Naive thymus-derived CD4-positive, alpha-beta T cell (primary cell): ENCODE measurements at regions of chr6 and their contacts with region 1.

Region 1: DNA sequence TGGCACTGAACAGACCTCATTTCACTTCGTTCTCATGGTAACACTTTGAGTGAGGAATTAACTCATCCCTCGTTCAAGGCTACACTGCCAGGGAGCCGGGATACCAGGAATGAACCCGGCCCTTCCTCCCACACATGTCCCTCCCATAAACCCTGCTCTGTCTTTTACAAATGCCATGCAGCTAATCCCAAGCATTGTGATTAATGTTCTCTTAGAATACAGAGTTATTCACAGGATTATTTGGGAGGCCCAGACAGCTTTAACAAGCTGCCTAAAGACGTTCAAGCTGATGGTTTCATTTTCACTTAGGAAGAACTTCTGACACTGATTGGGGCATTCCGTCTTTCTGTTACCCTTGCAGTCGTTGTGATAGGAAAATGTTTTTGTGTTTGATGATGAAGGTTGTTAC is 42.5 kb upstream of the CD83 start:
- DNase-seq: peak in 7 of 9 donors; percentile 46 to 71 (median 61)
- ATAC-seq: peak; percentile 93
- H3K4me3 ChIP-seq: peak overlapping the region; percentile 57
- H3K4me3 Mint-ChIP-seq: peak overlapping the region; percentile 72 to 92 (median 82)
- H3K27ac ChIP-seq: peak overlapping the region; percentile 84
- H3K27ac Mint-ChIP-seq: peak overlapping the region; percentile 87 to 99 (median 95)
- H3K4me1 ChIP-seq: peaks cover 5 to 7% of the 10 kb centered on the region in 2 donors
- H3K4me1 Mint-ChIP-seq: peaks cover 16 to 47% (median 27%) of the 10 kb centered on the region in 7 donors
- H3K27me3 ChIP-seq: no peaks in the 10 kb centered on the region
- H3K27me3 Mint-ChIP-seq: no peaks in the 10 kb centered on the region

Region 2: GRCh38 chr6:14095437-14095836 is 20.3 kb after region 1 on chr6:
- CTCF ChIA-PET with region 1: no interaction called
- POLR2A ChIA-PET with region 1: no interaction called
- intact Hi-C with region 1: loop called in 1 of 2 experiments (anchors 2 kb)
- DNase-seq: no peak
- ATAC-seq: peak; percentile 48
- H3K4me3 ChIP-seq: no peak overlapping the region
- H3K4me3 Mint-ChIP-seq: no peak overlapping the region
- H3K27ac ChIP-seq: no peak overlapping the region
- H3K27ac Mint-ChIP-seq: peak overlapping the region in 1 of 9 donors; percentile 65
- H3K4me1 ChIP-seq: no peaks in the 10 kb centered on the region
- H3K4me1 Mint-ChIP-seq: peaks cover 5 to 26% (median 7%) of the 10 kb centered on the region in 7 donors
- H3K27me3 ChIP-seq: peaks cover 0 to 4% of the 10 kb centered on the region in 2 donors
- H3K27me3 Mint-ChIP-seq: peaks cover 0 to 1% (median 0%) of the 10 kb centered on the region in 5 donors